Activated naive CD4-positive, alpha-beta T cell treated with anti-CD3 and anti-CD28 coated beads for 36 hours (primary cell): ENCODE measurements at regions of chr12 and their contacts with region 1.

Region 1: DNA sequence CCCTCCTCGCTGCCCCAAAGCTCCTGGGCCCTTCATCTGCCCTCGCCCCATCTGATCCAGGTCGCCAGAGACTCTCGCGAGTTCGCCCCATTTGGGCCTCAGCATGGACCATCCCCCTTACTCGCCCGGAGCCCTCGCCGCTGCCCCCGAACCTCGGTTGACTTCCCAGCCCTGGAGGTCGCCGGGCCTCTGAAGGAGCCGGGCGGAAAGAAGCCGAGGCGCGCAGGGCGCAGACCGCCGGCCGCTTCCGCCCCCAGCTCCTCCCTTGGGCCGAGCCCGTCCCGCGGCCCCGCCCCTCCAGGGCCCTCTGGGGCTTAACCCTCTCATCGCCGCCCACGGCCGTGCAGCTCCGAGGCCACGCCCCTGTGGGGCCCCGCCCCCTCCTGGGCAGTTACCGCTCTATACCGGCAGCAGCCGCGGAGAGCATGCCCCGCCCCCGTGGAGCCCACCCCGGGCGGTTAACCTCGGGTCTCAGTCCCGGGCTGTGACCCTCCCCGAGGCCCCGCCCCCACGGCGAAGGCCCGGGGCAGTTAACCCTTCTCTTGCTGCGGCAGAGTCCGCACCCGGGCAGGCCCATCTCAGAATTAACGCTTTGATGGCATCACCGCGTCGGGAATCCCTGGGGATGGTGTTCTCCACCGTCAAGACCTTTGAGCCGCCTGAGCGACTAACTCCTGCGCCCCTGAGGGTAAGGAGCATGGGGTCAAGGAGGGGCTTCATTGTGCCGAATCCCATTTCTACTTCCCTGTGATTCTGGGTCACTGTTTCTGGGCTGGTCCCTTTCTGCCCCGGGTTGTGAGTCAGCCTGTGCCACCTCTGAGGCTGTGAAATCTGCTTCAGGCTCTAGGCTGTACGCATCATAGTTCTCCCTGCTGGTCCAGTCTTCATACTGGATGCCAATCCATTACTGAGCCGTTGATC is at the start of gene SPSB2:
- DNase-seq: peak; percentile 99
- H3K4me3 Mint-ChIP-seq: peak within 1 kb of the TSS; percentile 88
- H3K27ac Mint-ChIP-seq: peak within 1 kb of the TSS; percentile 81
- H3K4me1 Mint-ChIP-seq: peaks cover 45% of the 10 kb centered on the region
- H3K27me3 Mint-ChIP-seq: no peaks in the 10 kb centered on the region
- total RNA-seq, gene SPSB2: 2.6 to 2.8 TPM

Region 2: GRCh38 chr12:6684609-6685008 is 188.7 kb before region 1 on chr12:
- CTCF ChIA-PET with region 1: no interaction called
- intact Hi-C with region 1: no loop called
- DNase-seq: peak; percentile 78
- H3K4me3 Mint-ChIP-seq: no peak overlapping the region
- H3K27ac Mint-ChIP-seq: peak overlapping the region; percentile 68
- H3K4me1 Mint-ChIP-seq: peaks cover 51% of the 10 kb centered on the region
- H3K27me3 Mint-ChIP-seq: no peaks in the 10 kb centered on the region

Region 3: DNA sequence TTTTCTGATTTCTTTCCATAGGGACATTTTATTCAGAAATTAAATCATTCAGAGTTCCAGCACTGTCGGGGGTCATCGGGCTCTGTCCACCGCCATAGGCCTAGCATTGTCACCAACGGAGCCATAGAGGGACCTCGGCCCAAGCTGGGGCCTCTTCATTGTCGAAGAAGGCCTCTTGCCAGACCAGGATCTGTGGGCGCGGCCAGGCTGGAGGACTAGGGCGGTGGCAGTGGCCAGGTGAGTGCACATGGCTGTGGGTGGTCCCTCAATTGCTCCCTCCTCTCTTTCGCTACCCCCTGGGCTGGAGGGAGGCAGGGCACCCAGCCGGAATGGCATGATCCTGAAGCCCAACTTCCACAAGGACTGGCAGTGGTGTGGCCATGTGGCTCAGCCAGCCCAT is 10.3 kb after region 1 on chr12:
- CTCF ChIA-PET with region 1: interaction called, 22 read pairs
- intact Hi-C with region 1: no loop called
- DNase-seq: no peak
- H3K4me3 Mint-ChIP-seq: no peak overlapping the region
- H3K27ac Mint-ChIP-seq: no peak overlapping the region
- H3K4me1 Mint-ChIP-seq: peaks cover 1% of the 10 kb centered on the region
- H3K27me3 Mint-ChIP-seq: no peaks in the 10 kb centered on the region

Region 4: GRCh38 chr12:6914246-6914946 is 41.0 kb after region 1 on chr12 and contains the start of gene ENO2:
- CTCF ChIA-PET with region 1: interaction called, 3 read pairs
- intact Hi-C with region 1: loop called (anchors 1 kb)
- DNase-seq: peak; percentile 86
- H3K4me3 Mint-ChIP-seq: peak within 1 kb of the TSS; percentile 89
- H3K27ac Mint-ChIP-seq: peak within 1 kb of the TSS; percentile 71
- H3K4me1 Mint-ChIP-seq: peaks cover 35% of the 10 kb centered on the region
- H3K27me3 Mint-ChIP-seq: no peaks in the 10 kb centered on the region
- total RNA-seq, gene ENO2: 128 to 131 TPM

Region 5: DNA sequence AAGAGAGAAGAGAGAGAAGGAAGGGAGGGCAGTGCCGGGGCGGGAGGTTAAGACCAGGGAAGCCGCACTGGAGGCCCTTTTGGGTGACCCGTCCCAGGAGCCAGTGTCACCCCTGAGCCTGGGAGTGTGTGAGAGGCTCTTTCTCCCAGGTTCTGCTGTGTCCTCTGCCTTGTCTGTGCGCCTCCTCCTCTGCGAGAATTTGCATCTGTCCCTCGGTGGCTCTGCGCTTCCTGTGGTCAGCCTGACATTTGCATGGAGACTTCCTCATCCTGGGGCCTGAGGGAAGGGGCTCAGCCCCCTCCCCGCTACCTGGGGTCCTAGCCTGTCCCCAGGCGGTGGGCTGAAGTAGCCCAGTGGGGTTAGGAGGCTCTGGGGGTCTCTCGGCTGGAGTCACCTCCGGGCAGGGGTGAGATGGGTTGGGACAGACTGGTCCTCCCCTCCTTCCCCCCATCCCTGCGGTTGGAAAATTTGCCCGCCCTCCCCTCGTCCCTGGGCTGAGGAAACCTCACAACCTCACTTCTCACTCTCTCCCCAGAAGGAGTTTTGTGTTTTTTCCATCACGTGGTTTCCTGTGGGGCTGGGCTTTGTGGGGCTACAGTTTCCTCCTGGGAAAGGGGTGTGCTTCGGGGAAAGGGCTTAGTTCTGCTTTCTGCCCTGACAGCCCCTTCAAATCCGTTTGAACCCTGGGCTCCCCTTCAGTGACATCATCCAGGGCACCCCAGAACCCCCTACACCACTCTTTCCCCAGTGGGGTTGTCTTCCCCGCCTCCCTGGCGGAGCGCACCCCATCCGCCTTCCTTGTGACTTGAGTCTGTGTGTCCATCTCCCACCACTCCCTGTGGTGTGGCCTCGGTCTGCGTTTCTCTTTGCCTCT is 80.3 kb after region 1 on chr12:
- CTCF ChIA-PET with region 1: interaction called, 4 read pairs
- intact Hi-C with region 1: loop called (anchors 5 kb)
- DNase-seq: peak; percentile 87
- H3K4me3 Mint-ChIP-seq: peak overlapping the region; percentile 98
- H3K27ac Mint-ChIP-seq: peak overlapping the region; percentile 93
- H3K4me1 Mint-ChIP-seq: peaks cover 69% of the 10 kb centered on the region
- H3K27me3 Mint-ChIP-seq: no peaks in the 10 kb centered on the region

Region 6: DNA sequence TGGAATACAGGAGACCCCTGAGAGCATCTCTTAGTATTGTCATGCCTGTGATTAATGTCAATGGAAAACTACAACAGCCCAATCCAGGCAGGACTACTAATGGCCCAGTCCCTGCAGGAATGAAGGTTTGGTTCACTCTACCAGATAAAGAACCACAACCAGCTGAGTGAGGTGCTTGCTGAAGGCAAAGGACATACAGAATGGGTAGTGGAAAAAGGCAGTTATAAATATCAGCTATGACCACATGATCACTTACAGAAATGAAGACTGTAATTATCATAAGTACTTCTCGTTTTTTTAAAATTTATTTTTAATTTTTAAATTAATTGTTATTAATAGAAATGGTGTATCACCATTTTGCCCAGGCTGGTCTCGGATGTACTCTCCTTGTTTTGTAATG is 162.1 kb after region 1 on chr12:
- CTCF ChIA-PET with region 1: no interaction called
- intact Hi-C with region 1: no loop called
- DNase-seq: no peak
- H3K4me3 Mint-ChIP-seq: no peak overlapping the region
- H3K27ac Mint-ChIP-seq: no peak overlapping the region
- H3K4me1 Mint-ChIP-seq: no peaks in the 10 kb centered on the region
- H3K27me3 Mint-ChIP-seq: no peaks in the 10 kb centered on the region

Region 7: DNA sequence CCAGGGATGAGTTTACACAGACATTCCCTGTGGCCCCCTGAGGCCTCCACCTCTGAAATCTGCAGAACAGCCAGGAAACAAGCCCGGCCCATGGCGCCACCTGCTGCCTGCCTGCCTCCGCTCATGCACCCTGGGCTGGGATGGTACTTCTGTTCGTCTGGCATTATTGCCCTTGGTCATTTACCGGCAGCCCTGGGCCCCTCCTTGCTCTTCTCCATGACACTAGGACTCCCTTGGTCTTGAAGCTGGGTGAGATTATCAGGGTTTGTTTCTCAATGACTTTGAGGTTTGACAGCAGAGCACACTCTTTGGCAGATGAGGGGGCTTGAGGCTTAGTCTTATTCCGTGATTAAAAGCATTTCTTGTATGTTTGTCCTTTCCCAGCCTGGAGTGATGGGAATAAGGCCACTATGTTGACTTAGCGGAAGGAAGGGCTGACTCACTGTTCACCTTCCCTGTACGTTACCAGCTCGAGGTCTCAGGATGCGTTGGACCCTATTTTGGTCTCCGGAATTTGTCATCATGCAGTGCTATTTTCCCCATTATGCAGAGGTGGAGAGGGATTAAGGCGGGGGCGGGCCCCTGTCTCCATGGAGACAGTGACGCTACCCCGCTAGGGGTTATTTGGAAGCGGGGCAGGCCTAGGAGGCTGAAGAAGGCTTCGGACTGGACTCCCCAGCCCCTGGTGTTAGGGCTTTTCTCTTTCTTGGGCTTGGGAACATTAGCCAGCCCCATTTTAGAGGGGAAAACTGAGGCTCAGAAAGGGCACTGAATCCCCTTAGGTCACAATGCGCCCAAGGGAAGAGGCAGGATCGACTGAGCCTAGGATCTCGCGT is 315.4 kb after region 1 on chr12:
- CTCF ChIA-PET with region 1: no interaction called
- intact Hi-C with region 1: loop called (anchors 1 kb)
- DNase-seq: peak; percentile 87
- H3K4me3 Mint-ChIP-seq: peak overlapping the region; percentile 88
- H3K27ac Mint-ChIP-seq: peak overlapping the region; percentile 95
- H3K4me1 Mint-ChIP-seq: peaks cover 36% of the 10 kb centered on the region
- H3K27me3 Mint-ChIP-seq: no peaks in the 10 kb centered on the region